ENCODE measurements at regions of chr10 and their contacts with region 1.

Region 1: GRCh38 chr10:61024856-61025600 is 81.0 kb upstream of the RHOBTB1 start:
- DNase-seq: no peak
- H3K4me3 ChIP-seq: no peak overlapping the region
- H3K27ac ChIP-seq: no peak overlapping the region
- H3K4me1 ChIP-seq: no peaks in the 10 kb centered on the region
- H3K27me3 ChIP-seq: no peaks in the 10 kb centered on the region
- CTCF ChIP-seq: no peak
- EP300 ChIP-seq: no peak
- POLR2A ChIP-seq: no peak

Region 2: GRCh38 chr10:60351191-60351853 is 673.7 kb before region 1 on chr10:
- intact Hi-C with region 1: no loop called
- DNase-seq: no peak
- H3K4me3 ChIP-seq: no peak overlapping the region
- H3K27ac ChIP-seq: no peak overlapping the region
- H3K4me1 ChIP-seq: peaks cover 4% of the 10 kb centered on the region
- H3K27me3 ChIP-seq: no peaks in the 10 kb centered on the region
- CTCF ChIP-seq: no peak
- EP300 ChIP-seq: no peak
- POLR2A ChIP-seq: no peak

Region 3: DNA sequence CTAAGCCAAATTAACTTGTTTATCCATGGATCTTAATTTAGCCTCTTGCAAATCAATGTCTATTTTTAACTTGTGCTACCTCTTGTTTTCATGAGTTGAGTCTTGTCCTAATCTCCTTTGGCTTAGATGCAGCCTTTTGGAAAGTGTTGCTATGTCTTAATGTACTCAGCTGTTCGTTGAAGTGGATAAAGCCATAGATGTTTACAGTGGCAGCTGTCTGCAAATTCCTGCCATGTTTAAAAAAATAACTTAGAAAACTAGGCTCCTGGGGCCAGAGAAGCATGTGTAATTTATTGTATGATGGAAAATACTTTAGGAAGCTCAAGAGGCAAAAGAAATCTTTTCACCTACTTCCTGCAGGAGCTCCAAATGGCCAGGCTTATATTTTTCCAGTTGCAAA is 172.0 kb after region 1 on chr10:
- intact Hi-C with region 1: no loop called
- DNase-seq: no peak
- H3K4me3 ChIP-seq: no peak overlapping the region
- H3K27ac ChIP-seq: no peak overlapping the region
- H3K4me1 ChIP-seq: no peaks in the 10 kb centered on the region
- H3K27me3 ChIP-seq: no peaks in the 10 kb centered on the region
- CTCF ChIP-seq: no peak
- EP300 ChIP-seq: no peak
- POLR2A ChIP-seq: no peak

Region 4: GRCh38 chr10:61319386-61320256 is 294.6 kb after region 1 on chr10:
- intact Hi-C with region 1: loop called in 1 of 4 experiments (anchors 5 kb)
- DNase-seq: no peak
- H3K4me3 ChIP-seq: no peak overlapping the region
- H3K27ac ChIP-seq: no peak overlapping the region
- H3K4me1 ChIP-seq: no peaks in the 10 kb centered on the region
- H3K27me3 ChIP-seq: no peaks in the 10 kb centered on the region
- CTCF ChIP-seq: no peak
- EP300 ChIP-seq: no peak
- POLR2A ChIP-seq: no peak